ENCODE measurements at regions of chr17 and their contacts with region 1.

Region 1: DNA sequence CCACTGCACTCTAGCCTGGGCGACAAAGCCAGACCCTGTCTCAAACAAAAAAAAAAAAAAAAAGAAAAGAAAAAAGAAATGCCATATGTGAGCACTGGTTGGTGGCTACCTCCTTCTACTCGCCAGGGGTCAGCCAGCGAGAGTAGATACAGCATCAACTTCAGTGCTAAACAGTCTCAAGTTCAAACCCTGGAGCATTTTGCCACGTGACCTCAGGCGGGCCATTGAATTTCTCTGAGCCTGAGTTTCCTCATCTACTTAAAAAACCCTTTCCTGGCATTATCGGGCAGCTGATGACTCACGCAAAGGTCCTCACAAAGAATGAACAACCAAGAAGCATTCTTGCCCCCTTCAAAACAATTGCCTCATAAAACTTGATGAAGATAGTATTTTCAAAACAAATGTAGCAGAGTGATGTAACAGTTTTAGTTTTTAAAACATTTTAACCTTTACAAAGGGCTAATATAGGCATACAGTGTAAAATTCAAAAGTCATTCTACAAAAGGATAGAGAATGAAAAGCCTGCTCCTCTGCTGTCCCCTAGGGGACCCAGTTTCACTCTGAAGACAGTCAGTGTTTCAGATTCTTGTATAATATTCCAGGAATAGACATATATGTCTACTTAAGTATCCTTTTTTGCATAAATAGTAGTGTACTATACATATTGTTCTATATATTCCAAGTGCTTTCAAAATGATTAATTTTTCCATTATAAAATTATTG is 28.4 kb downstream of the DNAH2 start:
- DNase-seq: peak; percentile 29 to 56 (median 41)
- H3K4me3 ChIP-seq: no peak overlapping the region
- H3K27ac ChIP-seq: no peak overlapping the region
- H3K4me1 ChIP-seq: peaks cover 3% of the 10 kb centered on the region
- H3K27me3 ChIP-seq: no peaks in the 10 kb centered on the region
- CTCF ChIP-seq: no peak
- EP300 ChIP-seq: no peak
- POLR2A ChIP-seq: no peak

Region 2: DNA sequence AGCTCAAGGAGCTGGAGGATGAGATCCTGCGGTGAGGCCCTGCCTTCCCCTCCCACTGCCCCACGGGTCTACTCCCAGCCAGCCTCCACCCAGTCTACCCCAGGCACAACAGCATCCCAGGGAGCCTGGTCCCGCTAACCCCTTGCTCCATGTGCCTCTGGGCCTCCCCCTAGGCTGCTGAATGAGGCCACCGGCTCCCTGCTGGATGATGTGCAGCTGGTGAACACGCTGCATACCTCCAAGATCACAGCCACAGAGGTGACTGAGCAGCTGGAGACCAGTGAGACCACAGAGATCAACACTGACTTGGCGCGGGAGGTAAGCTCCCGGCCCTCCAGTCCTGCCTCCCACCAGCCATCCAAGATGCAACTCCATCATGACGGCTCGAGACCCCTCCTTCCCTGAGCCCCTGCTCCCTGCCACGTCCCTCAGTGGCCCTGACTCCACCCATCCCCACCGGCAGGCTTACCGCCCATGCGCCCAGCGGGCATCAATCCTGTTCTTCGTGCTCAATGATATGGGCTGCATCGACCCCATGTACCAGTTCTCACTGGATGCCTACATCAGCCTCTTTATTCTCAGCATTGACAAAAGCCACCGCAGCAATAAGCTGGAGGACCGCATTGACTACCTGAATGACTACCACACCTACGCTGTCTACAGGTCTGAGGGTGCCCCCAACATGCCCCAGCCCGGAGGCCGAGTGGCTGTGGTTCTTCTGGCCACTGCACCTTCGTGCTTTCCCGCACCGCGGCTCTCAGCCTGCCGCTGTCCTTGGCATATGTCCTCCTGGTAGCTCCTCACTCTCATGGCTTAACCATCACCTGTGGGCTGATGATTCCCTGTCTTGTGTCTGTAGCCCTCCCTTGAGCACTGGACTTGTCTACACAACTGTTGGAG is 73.1 kb after region 1 on chr17:
- intact Hi-C with region 1: loop called in 2 of 4 experiments (anchors 5 kb)
- DNase-seq: no peak
- H3K4me3 ChIP-seq: no peak overlapping the region
- H3K27ac ChIP-seq: no peak overlapping the region
- H3K4me1 ChIP-seq: no peaks in the 10 kb centered on the region
- H3K27me3 ChIP-seq: no peaks in the 10 kb centered on the region
- CTCF ChIP-seq: no peak
- EP300 ChIP-seq: no peak
- POLR2A ChIP-seq: no peak

Region 3: DNA sequence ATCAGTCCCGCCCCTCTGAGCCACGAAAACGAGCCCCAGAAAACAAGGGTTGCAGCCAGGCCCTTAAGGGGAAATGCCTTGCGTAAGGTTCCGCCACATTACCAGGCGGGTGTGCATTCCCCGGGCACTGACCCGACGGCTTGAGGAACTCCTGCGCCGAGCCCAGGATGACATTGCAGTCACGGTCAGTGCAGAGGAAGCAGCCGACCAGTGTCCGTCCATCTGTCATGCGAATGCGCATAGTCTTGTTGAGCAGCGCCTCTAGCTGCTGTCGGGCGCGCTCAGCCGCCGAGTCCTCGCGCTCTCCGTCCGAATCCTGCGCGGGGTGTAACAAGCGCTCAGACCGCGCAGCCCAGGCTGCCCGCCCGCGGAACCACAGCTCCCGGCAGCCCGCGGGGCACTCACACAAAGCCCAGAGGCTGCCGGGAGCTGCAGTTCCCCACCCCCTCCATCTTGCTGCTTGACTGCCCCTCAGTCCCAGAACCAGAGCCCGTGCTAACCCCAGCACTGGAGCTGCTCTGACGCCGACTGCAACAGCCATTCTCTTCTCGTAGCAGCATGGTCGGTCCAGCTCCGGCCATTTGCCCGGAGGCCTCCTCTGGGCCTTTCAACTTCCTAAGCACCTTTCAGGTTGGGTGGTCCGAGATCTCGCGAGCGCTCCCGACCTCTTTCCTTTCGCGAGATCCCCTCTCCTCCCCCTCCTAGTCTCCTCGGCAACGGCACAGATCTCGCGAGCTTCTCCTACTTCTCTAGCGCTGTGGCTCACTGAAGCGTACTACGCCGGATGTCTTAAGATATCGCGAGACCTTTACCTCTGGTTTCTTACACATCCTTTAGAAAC is 111.2 kb after region 1 on chr17 and contains the start of gene NAA38:
- intact Hi-C with region 1: loop called in 2 of 4 experiments (anchors 5 to 10 kb)
- DNase-seq: peak; percentile 95 to 98 (median 97)
- H3K4me3 ChIP-seq: peak within 1 kb of the TSS; percentile 71
- H3K27ac ChIP-seq: peak within 1 kb of the TSS; percentile 84 to 85
- H3K4me1 ChIP-seq: peaks cover 6% of the 10 kb centered on the region
- H3K27me3 ChIP-seq: no peaks in the 10 kb centered on the region
- CTCF ChIP-seq: peak in 2 of 3 donors; percentile 49 to 76
- EP300 ChIP-seq: no peak
- POLR2A ChIP-seq: peak; percentile 29
- total RNA-seq, gene NAA38: 46.4 to 82.8 (median 54.6) TPM

Region 4: GRCh38 chr17:8057691-8058114 is 311.8 kb after region 1 on chr17:
- intact Hi-C with region 1: loop called in 2 of 4 experiments (anchors 10 kb)
- DNase-seq: peak in 2 of 5 donors; percentile 37 to 38
- H3K4me3 ChIP-seq: no peak overlapping the region
- H3K27ac ChIP-seq: no peak overlapping the region
- H3K4me1 ChIP-seq: no peaks in the 10 kb centered on the region
- H3K27me3 ChIP-seq: no peaks in the 10 kb centered on the region
- CTCF ChIP-seq: peak; percentile 25 to 75 (median 66)
- EP300 ChIP-seq: no peak
- POLR2A ChIP-seq: no peak